Calu3 (cell line): ENCODE measurements at regions of chr3 and their contacts with region 1.

Region 1: DNA sequence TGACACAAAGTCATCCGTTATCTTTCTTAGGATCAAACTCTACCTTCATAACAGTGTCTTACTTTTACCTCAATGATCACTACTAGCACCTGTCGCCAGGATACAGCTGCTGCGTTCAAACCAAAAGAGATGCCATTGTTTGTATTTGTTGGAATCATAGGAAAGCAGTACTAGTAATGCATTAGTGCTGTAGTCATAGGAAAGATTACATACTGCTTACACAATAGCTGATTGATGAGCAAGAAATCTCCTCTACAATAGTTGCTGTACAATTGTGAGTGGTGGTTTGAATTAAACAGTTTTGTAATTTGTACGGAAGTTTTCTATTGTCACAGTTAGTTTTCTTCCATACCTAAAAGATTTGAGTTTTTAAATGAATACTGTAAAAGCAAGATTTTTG is 21.4 kb downstream of the ACAP2 start:
- DNase-seq: no peak
- H3K4me3 Mint-ChIP-seq: no peak overlapping the region
- H3K27ac Mint-ChIP-seq: no peak overlapping the region
- H3K4me1 Mint-ChIP-seq: peaks cover 20% of the 10 kb centered on the region
- H3K27me3 Mint-ChIP-seq: no peaks in the 10 kb centered on the region
- CTCF ChIP-seq: no peak

Region 2: DNA sequence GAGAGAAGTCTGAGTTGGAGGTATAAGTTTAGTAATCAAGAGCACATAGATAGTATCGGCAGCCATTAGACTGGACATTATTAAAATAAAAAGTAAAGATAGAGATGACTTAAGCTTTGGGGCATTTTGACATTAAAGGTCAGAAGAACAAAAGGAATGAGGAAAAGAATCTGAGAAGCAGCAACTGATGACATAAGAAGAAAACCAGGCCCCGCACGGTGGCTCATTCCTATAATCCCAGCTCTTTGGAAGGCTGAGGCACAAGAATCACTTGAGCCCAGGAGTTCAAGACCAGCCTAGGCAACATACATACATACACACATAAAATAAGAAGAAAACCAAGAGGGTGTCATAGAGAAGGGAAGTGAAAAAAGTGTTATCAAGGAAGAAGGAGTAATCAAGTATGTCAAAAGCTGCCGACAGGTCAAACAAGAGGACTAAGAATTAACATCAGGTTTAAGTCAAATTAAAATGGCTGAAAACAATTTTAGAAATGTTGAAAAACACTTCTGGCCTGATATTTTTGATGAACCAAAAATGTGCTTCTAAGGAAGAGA is 17.5 kb before region 1 on chr3:
- CTCF ChIA-PET with region 1: interaction called, 4 read pairs
- intact Hi-C with region 1: loop called (anchors 2 kb)
- DNase-seq: no peak
- H3K4me3 Mint-ChIP-seq: no peak overlapping the region
- H3K27ac Mint-ChIP-seq: no peak overlapping the region
- H3K4me1 Mint-ChIP-seq: no peaks in the 10 kb centered on the region
- H3K27me3 Mint-ChIP-seq: no peaks in the 10 kb centered on the region
- CTCF ChIP-seq: no peak